ENCODE measurements at regions of chr5 and their contacts with region 1.

Region 1: DNA sequence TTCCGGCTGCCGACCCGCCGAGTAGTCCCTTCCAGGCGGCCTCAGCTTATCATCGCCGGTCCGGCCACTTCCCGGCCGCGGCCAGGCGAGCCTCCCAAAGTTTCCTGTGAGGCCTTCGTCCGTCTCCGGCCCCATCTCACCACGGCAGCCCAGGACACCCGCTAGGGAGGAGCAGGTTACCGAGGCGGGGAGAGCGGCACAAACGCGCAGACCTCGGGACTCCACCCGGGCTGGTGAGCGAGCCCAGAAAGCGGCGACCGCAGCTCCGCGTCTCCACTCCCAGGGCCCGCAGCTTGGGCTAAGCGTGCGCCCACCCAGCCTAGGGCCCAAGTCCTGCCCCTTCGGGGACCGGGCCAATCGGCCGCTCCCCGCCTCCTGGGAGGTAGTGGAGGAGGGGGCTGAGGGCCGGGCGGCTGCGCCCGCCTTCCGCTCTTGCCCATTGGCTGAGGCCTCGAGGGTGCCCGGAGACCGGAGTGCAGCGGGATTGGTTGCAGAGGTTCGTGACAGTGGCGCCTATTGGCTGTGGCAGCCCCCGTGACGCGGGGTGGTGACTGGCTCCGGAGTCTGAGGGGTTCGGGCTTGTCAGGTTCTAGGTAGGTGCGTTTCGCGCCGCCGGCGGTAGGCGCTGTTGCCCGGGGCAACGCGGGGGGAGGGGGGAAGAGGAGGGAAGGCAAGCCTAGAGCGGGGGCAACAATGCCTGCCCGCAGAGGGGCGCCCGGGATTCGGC is 867 bp downstream of the FER start:
- DNase-seq: peak; percentile 99
- H3K4me3 ChIP-seq: peak overlapping the region; percentile 81 to 92 (median 82)
- H3K27ac ChIP-seq: peak overlapping the region; percentile 95 to 98 (median 96)
- H3K4me1 ChIP-seq: peaks cover 0 to 18% (median 16%) of the 10 kb centered on the region in 4 donors
- H3K27me3 ChIP-seq: no peaks in the 10 kb centered on the region
- CTCF ChIP-seq: peak in 3 of 5 experiments; percentile 6 to 41 (median 39)
- EP300 ChIP-seq: no peak
- POLR2A ChIP-seq: peak; percentile 99

Region 2: DNA sequence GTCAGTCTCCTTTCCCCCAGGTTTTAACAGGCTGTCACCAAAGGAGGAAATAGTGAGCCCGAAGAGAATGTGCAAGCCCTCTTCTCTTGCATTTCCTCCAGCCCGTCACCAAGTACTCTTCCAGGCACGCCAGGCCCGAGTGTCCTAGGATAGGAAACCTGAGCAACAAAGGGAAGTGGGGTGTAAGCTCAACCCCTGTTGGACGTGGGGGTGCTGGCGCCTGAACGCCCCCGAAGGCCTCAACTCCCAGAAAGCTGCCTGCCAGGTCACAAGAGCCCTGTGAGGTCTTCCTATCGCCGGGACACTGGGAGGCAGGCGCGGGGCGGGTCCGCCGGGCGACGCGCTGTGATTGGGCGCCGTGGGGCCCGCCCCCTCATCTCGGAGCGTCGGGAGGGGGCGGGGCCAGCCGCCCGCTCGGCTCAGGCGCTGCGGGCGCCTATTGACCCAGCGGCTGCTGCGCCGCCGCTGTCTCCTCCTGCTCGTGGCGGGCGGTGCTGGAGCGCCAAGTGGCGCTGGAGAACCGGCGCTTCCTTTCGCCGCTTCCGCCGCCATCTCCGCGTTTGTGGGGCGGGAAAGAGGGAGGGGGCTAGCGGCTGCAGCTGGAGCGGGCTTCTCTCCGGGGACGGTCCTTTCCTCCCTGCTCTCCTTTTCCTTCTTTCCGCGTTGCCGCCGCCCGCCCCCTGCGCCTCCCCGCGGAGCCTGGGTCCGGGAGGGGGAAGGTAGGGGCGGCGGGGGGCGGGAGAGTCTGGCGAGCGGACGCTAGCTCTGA is 940.6 kb after region 1 on chr5:
- in situ Hi-C with region 1: loop called in 1 of 4 experiments (anchors 25 kb)
- intact Hi-C with region 1: no loop called
- DNase-seq: peak; percentile 90
- H3K4me3 ChIP-seq: peak overlapping the region; percentile 88 to 97 (median 96)
- H3K27ac ChIP-seq: peak overlapping the region; percentile 96 to 100 (median 99)
- H3K4me1 ChIP-seq: peaks cover 17 to 41% (median 23%) of the 10 kb centered on the region in 4 donors
- H3K27me3 ChIP-seq: no peaks in the 10 kb centered on the region
- CTCF ChIP-seq: peak in 1 of 5 experiments; percentile 20
- EP300 ChIP-seq: no peak
- POLR2A ChIP-seq: peak; percentile 90

Measured in transverse colon (tissue), 4 donors.